ENCODE measurements at regions of chr20 and their contacts with region 1.

Region 1: GRCh38 chr20:51385646-51386530 is 156.6 kb downstream of the NFATC2 start:
- DNase-seq: no peak
- H3K4me3 Mint-ChIP-seq: no peak overlapping the region
- H3K27ac Mint-ChIP-seq: no peak overlapping the region
- H3K4me1 Mint-ChIP-seq: peaks cover 62% of the 10 kb centered on the region
- H3K27me3 Mint-ChIP-seq: no peaks in the 10 kb centered on the region

Region 2: GRCh38 chr20:51326201-51326819 is 59.6 kb before region 1 on chr20:
- intact Hi-C with region 1: no loop called
- DNase-seq: no peak
- H3K4me3 Mint-ChIP-seq: no peak overlapping the region
- H3K27ac Mint-ChIP-seq: no peak overlapping the region
- H3K4me1 Mint-ChIP-seq: no peaks in the 10 kb centered on the region
- H3K27me3 Mint-ChIP-seq: peaks cover 5% of the 10 kb centered on the region

Region 3: DNA sequence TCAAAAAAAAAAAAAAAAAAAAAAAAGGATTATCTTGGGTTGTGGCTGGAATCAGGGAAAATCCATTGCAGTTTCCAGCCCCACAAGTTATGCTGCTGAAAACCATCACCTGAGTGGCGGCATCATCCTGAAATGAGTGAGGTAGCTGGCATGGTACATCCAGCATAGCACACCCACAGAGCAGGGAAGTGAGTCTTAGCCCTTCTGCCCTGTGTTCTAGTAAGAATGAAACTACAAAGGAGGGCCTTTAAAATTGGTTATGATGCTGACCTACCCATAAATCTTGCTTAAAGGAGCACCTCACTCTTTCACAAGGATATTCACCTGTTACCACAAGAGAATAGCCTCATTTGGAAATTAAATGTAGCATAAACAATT is 37.4 kb after region 1 on chr20:
- intact Hi-C with region 1: loop called (anchors 5 kb)
- DNase-seq: no peak
- H3K4me3 Mint-ChIP-seq: no peak overlapping the region
- H3K27ac Mint-ChIP-seq: peak overlapping the region; percentile 85
- H3K4me1 Mint-ChIP-seq: peaks cover 50% of the 10 kb centered on the region
- H3K27me3 Mint-ChIP-seq: no peaks in the 10 kb centered on the region

Region 4: GRCh38 chr20:51500311-51500710 is 114.4 kb after region 1 on chr20:
- intact Hi-C with region 1: loop called (anchors 2 kb)
- DNase-seq: peak; percentile 46
- H3K4me3 Mint-ChIP-seq: no peak overlapping the region
- H3K27ac Mint-ChIP-seq: peak overlapping the region; percentile 79
- H3K4me1 Mint-ChIP-seq: peaks cover 74% of the 10 kb centered on the region
- H3K27me3 Mint-ChIP-seq: no peaks in the 10 kb centered on the region

Region 5: GRCh38 chr20:51531141-51531710 is 145.3 kb after region 1 on chr20:
- intact Hi-C with region 1: loop called (anchors 2 kb)
- DNase-seq: peak; percentile 44
- H3K4me3 Mint-ChIP-seq: peak overlapping the region; percentile 82
- H3K27ac Mint-ChIP-seq: peak overlapping the region; percentile 99
- H3K4me1 Mint-ChIP-seq: peaks cover 84% of the 10 kb centered on the region
- H3K27me3 Mint-ChIP-seq: no peaks in the 10 kb centered on the region

Region 6: DNA sequence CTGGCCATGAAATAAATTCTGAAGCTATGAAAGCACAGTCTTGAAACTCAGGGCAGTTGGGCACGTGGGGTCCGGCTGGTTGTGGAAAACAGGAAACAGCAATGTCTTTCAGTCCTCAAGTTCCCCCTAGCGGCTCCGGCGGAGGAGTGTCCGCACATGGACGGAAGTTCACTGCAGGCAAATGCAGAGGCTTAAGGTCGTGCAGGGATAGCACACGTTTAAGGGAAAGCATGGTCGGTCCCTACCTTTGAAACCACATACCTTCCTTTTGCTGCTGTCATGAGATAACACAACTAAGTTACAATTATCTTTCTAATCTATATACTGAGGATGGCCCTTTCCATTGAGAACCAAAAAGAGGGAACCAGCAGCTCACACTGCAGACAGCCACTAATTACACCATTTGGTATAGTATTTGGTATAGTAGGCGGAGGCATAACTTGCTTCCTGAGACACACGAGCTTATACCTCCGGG is 209.2 kb after region 1 on chr20:
- intact Hi-C with region 1: loop called (anchors 2 kb)
- DNase-seq: peak; percentile 72
- H3K4me3 Mint-ChIP-seq: peak overlapping the region; percentile 17
- H3K27ac Mint-ChIP-seq: peak overlapping the region; percentile 65
- H3K4me1 Mint-ChIP-seq: peaks cover 46% of the 10 kb centered on the region
- H3K27me3 Mint-ChIP-seq: no peaks in the 10 kb centered on the region

Measured in activated T-helper 2 cell treated with anti-CD3 and anti-CD28 coated beads, Interferon-gamma antibody, Interleukin-2, Interleukin-4, amounts not matched to agents 10 μg/mL and 5 μg/mL and 100 μg/mL, durations not matched to agents 14 hours and 24 hours and 36 hours (primary cell).